ENCODE measurements at regions of chr17 and their contacts with region 1.

Region 1: GRCh38 chr17:40531051-40531991 is 29.9 kb upstream of the TNS4 start:
- DNase-seq: no peak

Region 2: DNA sequence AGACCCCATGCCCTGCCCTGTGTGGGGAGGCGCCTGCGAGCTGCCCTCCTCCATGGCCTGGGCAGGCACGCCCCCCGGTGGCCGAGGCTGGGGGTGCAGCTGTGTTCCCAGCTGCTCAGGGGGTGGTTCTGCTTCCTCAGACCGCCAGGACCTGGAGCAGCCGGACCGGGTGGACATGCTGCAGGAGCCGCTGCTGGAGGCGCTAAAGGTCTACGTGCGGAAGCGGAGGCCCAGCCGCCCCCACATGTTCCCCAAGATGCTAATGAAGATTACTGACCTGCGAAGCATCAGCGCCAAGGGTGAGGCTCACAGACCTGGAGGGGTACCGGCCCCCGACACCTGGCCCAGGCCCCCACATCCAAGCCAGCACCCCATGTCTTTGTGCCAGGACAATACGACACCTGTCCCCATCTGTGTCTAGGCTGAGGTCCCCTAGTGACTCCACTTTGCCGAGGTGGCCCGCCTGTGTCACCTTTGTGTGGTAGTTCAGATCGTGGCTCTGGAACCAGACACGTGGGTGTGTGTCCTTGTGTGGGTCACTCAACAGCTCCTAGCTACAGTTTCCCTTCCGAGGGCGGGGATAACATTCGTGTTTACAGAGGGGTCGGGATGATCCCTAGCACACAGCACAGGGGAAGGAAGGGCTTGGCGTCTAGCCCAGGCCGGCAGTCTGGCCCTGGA is 176.1 kb before region 1 on chr17:
- CTCF ChIA-PET with region 1: interaction called, 36 read pairs
- POLR2A ChIA-PET with region 1: no interaction called
- DNase-seq: peak; percentile 72

Region 3: GRCh38 chr17:40417609-40418427 is 113.5 kb before region 1 on chr17 and contains the start of gene TOP2A:
- CTCF ChIA-PET with region 1: interaction called, 5 read pairs
- POLR2A ChIA-PET with region 1: interaction called, 17 read pairs
- DNase-seq: peak; percentile 92

Region 4: GRCh38 chr17:40499551-40500174 is 31.7 kb before region 1 on chr17:
- CTCF ChIA-PET with region 1: interaction called, 15 read pairs
- POLR2A ChIA-PET with region 1: no interaction called
- DNase-seq: peak; percentile 52

Region 5: DNA sequence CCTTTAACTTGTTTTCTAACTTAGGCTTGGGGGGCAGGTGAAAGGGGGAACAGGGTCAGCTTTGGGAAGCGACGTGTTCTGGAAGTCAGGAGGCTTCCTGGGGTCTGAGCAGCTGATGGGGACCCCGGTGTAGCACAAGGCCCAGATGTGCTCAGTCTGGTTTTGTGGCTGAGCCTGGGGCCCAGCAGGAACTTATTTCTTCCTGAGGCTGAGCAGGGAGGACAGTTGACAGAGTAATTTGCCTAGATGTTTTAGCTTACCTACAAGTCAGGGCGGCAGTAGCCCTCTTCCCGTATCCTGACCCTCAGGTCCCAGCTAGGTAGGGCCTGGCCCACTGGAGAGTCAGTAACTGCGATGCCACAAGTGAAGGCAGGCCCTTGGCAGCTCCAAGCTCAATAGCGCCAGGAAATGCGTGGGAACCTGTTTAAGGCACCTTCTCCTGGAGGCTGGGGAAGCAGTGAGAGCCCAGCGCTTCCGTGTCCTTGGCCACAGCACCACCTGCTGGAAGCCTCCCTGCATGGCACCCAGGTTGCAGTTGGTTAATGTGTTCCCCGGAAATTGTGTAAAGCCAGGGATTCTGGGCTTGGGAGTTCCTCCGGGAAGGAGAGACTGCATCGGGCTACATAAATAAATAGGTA is 28.8 kb after region 1 on chr17:
- CTCF ChIA-PET with region 1: interaction called, 17 read pairs
- POLR2A ChIA-PET with region 1: no interaction called
- DNase-seq: peak; percentile 87

Region 6: GRCh38 chr17:40596261-40596919 is 65.1 kb after region 1 on chr17:
- CTCF ChIA-PET with region 1: no interaction called
- POLR2A ChIA-PET with region 1: no interaction called
- DNase-seq: no peak

Region 7: GRCh38 chr17:40647624-40648383 is 116.5 kb after region 1 on chr17 and contains the start of gene SMARCE1:
- CTCF ChIA-PET with region 1: no interaction called
- POLR2A ChIA-PET with region 1: no interaction called
- DNase-seq: peak; percentile 56